ENCODE measurements at regions of chr11 and their contacts with region 1.

Region 1: GRCh38 chr11:75603791-75604736 is 42.0 kb downstream of the SERPINH1 start:
- DNase-seq: no peak
- H3K4me3 ChIP-seq: peak overlapping the region in 1 of 2 donors; percentile 43
- H3K27ac ChIP-seq: peak overlapping the region; percentile 83 to 86
- H3K4me1 ChIP-seq: peaks cover 3 to 10% of the 10 kb centered on the region in 2 donors
- H3K27me3 ChIP-seq: no peaks in the 10 kb centered on the region
- CTCF ChIP-seq: no peak

Region 2: DNA sequence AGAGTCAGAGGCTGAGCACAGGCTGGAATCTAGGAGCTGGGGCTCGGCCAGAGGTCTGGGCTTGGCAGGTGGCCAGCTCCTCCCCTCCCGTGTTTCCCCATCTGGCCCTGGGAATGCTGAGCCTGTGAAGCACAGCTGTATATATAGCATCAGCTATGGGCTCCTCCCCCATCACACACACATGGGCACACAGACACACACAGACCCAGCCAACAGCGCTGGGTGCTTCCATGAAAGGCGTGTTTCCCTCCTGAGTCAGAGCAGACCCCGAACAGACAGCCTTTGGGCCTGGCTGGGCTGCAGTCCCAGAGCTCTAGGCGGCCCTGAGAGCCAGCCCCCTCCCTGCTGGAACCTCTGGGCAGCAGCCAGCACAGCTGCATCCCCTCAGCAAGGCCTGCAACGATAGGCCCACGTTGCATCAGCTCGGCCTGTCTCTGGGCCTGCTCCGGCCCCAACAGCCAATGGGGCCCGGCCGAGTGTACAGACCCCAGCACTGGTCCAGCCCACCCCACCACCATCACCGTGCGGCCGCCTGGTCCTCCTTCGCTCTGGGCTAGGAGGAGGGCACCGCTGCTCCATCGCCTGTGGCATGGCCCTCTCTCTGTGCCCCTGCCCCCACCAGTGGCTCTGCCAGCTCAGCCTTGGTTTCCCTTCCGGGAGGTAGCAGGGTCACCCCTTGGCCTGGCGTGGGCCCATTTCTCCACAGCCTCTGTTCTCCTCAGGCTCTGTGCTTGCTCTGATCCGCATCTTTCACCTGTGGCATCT is 49.6 kb before region 1 on chr11:
- intact Hi-C with region 1: loop called (anchors 2 kb)
- DNase-seq: peak; percentile 93 to 98
- H3K4me3 ChIP-seq: peak overlapping the region; percentile 35
- H3K27ac ChIP-seq: peak overlapping the region; percentile 95 to 97
- H3K4me1 ChIP-seq: peaks cover 21 to 40% of the 10 kb centered on the region in 2 donors
- H3K27me3 ChIP-seq: no peaks in the 10 kb centered on the region
- CTCF ChIP-seq: no peak

Region 3: DNA sequence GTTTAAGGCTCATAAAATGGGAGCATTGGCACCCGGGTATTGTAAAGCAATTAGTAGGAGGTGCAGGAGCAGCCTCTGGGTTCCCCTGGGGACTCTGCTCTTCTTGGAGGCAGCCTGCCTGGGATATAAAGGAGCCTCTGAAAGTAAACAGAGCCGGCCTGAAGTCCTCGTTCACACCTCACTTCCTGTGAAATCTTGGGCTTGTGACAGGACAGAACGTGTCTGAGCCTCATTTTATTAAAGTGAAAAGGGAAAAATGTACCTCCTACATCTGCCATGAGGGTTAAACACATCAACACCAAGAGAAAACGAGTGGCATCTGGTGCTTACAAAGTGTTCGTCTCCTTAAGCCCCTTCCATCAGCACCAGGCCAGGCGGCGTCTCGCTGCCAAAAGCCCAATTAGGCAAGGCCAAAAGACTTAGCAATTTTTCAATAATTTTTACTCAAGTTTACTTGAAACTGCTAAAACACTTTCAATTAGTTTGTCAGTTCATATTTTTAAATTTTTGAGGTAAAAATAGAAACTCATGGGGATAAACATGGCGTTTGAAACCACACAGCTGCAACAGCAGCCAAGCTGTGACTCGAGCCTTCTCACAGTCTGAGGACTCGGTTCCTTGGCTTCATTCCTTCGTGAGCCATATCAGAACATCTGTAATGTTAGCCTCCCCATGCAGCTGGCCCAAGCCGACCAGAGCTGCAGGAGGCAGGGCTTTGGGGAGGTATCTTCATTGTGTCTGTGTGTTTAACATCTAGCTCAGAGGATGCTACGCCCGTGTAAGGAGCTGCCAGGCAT is 31.2 kb after region 1 on chr11:
- intact Hi-C with region 1: no loop called
- DNase-seq: peak in 1 of 2 donors; percentile 72
- H3K4me3 ChIP-seq: peak overlapping the region in 1 of 2 donors; percentile 14
- H3K27ac ChIP-seq: peak overlapping the region; percentile 65 to 71
- H3K4me1 ChIP-seq: peaks cover 0 to 13% of the 10 kb centered on the region in 2 donors
- H3K27me3 ChIP-seq: no peaks in the 10 kb centered on the region
- CTCF ChIP-seq: no peak

Region 4: GRCh38 chr11:75667831-75668450 is 63.9 kb after region 1 on chr11:
- intact Hi-C with region 1: loop called (anchors 2 kb)
- DNase-seq: peak in 1 of 2 donors; percentile 68
- H3K4me3 ChIP-seq: peak overlapping the region; percentile 66 to 74
- H3K27ac ChIP-seq: peak overlapping the region; percentile 48 to 54
- H3K4me1 ChIP-seq: peaks cover 0 to 14% of the 10 kb centered on the region in 2 donors
- H3K27me3 ChIP-seq: no peaks in the 10 kb centered on the region
- CTCF ChIP-seq: no peak

Region 5: DNA sequence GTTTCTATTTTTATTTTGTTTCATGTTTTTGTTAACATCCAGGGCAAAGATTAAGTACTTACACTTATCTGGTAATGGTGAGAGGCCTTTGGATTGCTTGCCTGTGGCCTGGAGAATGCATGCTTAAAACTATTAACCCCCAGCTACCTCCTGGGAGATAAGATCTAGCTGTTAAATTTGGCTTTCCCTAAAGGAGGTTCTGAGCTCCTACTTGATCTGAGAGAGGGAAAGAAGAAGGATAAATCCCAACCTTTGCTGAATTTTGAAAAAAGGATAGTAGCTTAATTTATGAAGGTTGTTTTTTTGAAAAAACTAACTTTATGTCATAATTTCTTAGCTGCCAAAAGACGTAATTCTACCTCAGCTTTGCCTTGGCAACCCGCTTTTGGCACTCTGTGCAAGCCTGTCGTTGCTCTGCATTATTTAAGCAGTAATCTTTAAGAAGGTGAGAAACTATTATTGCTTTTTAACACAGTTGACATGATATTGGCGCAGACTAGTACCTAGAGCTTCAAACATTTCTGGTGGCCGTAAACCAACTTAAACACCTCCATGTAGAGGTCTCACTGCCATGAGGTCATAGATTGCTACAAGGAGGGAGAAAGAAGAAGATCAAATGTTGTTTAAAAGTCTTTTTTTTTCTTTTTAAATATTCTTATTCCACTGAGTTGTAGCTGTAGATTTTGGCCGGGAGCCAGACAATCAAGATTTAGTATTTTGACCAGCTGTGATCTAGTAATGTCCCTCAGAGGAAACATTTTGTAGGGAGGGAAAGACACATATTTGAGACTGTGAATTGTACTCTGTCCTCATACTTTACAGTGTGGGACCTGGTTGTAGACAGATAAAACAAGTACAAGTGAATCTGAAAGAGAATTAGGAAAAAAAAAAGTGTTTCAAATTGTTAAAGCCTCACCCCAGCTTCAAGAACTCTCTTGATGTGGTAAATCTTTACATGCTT is 527.9 kb after region 1 on chr11:
- intact Hi-C with region 1: no loop called
- DNase-seq: no peak
- H3K4me3 ChIP-seq: no peak overlapping the region
- H3K27ac ChIP-seq: peak overlapping the region; percentile 62 to 65
- H3K4me1 ChIP-seq: peaks cover 0 to 12% of the 10 kb centered on the region in 2 donors
- H3K27me3 ChIP-seq: no peaks in the 10 kb centered on the region
- CTCF ChIP-seq: no peak

Measured in ascending aorta (tissue), 2 donors.